ENCODE measurements at regions of chr2 and their contacts with region 1.

Region 1: DNA sequence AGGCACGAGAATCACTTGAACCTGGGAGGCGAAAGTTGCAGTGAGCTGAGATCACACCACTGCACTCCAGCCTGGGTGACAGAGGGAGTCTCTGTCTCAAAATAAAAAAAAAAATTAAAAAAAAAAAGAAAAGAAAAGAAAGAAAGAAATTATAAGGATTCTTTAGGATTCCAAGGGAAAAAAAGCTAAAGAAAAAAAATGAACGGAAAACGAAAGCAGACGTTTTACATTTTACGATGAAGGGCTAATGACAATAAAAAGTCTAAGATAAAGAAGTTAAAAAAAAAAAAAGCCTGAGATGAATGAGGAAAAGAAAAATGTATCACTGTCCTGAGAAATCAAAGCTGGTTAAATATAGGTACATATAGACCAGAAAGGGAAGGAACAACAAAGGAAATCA is 58.5 kb downstream of the SOS1 start:
- DNase-seq: no peak
- ATAC-seq: no peak
- H3K4me3 ChIP-seq: no peak overlapping the region
- H3K27ac ChIP-seq: no peak overlapping the region
- H3K4me1 ChIP-seq: no peaks in the 10 kb centered on the region
- H3K27me3 ChIP-seq: no peaks in the 10 kb centered on the region
- CTCF ChIP-seq: no peak

Region 2: GRCh38 chr2:39227628-39228412 is 165.5 kb after region 1 on chr2:
- intact Hi-C with region 1: loop called (anchors 5 kb)
- DNase-seq: peak; percentile 87
- ATAC-seq: peak; percentile 92 to 94
- H3K4me3 ChIP-seq: peak overlapping the region; percentile 30
- H3K27ac ChIP-seq: no peak overlapping the region
- H3K4me1 ChIP-seq: peaks cover 15% of the 10 kb centered on the region
- H3K27me3 ChIP-seq: no peaks in the 10 kb centered on the region
- CTCF ChIP-seq: peak; percentile 90